ENCODE measurements at regions of chrX and their contacts with region 1.

Region 1: DNA sequence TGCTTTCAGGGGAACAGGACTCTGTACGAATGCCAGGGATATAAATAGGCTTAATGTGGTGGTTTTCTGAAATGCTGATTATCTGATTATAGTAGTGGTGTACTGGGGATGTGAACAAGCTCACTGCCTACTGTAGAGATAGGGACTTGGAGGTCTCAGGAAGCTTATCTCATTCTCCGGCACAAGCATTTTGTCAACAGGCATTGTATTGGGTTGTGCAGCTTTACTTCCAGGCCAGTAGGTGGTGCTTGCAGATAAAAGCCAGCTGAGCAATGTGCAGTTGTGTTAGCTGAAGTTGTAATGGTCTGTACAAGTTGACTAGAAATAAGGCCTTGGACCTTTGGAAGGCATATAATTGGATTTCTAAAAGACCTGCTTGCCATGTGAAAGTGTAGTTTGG is 49.5 kb upstream of the TMLHE start:
- DNase-seq: peak; percentile 19
- H3K4me3 Mint-ChIP-seq: no peak overlapping the region
- H3K27ac Mint-ChIP-seq: no peak overlapping the region
- H3K4me1 Mint-ChIP-seq: no peaks in the 10 kb centered on the region
- H3K27me3 Mint-ChIP-seq: peaks cover 10% of the 10 kb centered on the region
- CTCF ChIP-seq: peak; percentile 21

Region 2: GRCh38 chrX:154804957-154805695 is 857.2 kb before region 1 on chrX and contains the start of gene MPP1:
- CTCF ChIA-PET with region 1: no interaction called
- intact Hi-C with region 1: no loop called
- DNase-seq: peak; percentile 77
- H3K4me3 Mint-ChIP-seq: peak within 1 kb of the TSS; percentile 83
- H3K27ac Mint-ChIP-seq: no peak within 1 kb of the TSS
- H3K4me1 Mint-ChIP-seq: peaks cover 17% of the 10 kb centered on the region
- H3K27me3 Mint-ChIP-seq: peaks cover 61% of the 10 kb centered on the region
- CTCF ChIP-seq: no peak
- total RNA-seq, gene MPP1: 1.3 TPM in 1 of 2 replicates, not detected in the other

Region 3: GRCh38 chrX:155563099-155563498 is 99.2 kb before region 1 on chrX:
- CTCF ChIA-PET with region 1: interaction called, 15 read pairs
- intact Hi-C with region 1: no loop called
- DNase-seq: no peak
- H3K4me3 Mint-ChIP-seq: no peak overlapping the region
- H3K27ac Mint-ChIP-seq: no peak overlapping the region
- H3K4me1 Mint-ChIP-seq: no peaks in the 10 kb centered on the region
- H3K27me3 Mint-ChIP-seq: no peaks in the 10 kb centered on the region
- CTCF ChIP-seq: no peak

Region 4: DNA sequence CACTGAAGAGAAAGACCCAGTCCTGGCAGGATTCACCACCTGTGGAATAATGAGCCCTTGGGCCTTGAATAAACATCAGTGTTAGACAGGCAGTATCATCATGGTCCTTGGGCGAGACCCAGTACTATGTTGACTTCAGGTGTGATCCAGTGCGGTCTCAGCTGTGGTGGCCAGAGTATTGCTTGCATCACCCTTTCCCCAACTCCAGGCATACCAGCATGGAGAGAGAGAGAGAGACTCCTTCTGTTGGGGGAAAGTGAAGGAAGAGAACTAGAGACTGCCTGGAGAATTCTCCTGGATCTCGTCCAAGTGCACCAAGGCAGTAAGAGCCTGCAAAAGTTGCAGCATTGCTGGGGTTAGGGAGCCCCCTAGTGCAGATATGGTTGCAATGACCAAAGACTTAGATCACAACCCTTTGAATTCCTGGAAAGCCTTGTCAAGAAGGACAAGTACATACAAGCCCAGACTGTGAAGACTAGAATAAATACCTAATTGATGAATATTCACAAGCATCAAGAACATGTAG is 157.7 kb after region 1 on chrX:
- CTCF ChIA-PET with region 1: no interaction called
- intact Hi-C with region 1: loop called (anchors 1 kb)
- DNase-seq: peak; percentile 73
- H3K4me3 Mint-ChIP-seq: no peak overlapping the region
- H3K27ac Mint-ChIP-seq: no peak overlapping the region
- H3K4me1 Mint-ChIP-seq: no peaks in the 10 kb centered on the region
- H3K27me3 Mint-ChIP-seq: no peaks in the 10 kb centered on the region
- CTCF ChIP-seq: peak; percentile 53

Region 5: GRCh38 chrX:155888139-155888538 is 225.9 kb after region 1 on chrX:
- CTCF ChIA-PET with region 1: no interaction called
- intact Hi-C with region 1: no loop called
- DNase-seq: peak; percentile 3
- H3K4me3 Mint-ChIP-seq: no peak overlapping the region
- H3K27ac Mint-ChIP-seq: peak overlapping the region; percentile 29
- H3K4me1 Mint-ChIP-seq: peaks cover 27% of the 10 kb centered on the region
- H3K27me3 Mint-ChIP-seq: no peaks in the 10 kb centered on the region
- CTCF ChIP-seq: no peak

Measured in Calu3 (cell line).